Right ventricle myocardium inferior (tissue), 1 donor: ENCODE measurements at regions of chr10 and their contacts with region 1.

Region 1: GRCh38 chr10:29857843-29858701 is 201.3 kb downstream of the JCAD start:
- DNase-seq: peak; percentile 80
- ATAC-seq: peak; percentile 88

Region 2: GRCh38 chr10:29535012-29535777 is 322.9 kb before region 1 on chr10:
- intact Hi-C with region 1: loop called (anchors 10 kb)
- DNase-seq: no peak
- ATAC-seq: peak; percentile 77